ENCODE measurements at regions of chr6 and their contacts with region 1.

Region 1: DNA sequence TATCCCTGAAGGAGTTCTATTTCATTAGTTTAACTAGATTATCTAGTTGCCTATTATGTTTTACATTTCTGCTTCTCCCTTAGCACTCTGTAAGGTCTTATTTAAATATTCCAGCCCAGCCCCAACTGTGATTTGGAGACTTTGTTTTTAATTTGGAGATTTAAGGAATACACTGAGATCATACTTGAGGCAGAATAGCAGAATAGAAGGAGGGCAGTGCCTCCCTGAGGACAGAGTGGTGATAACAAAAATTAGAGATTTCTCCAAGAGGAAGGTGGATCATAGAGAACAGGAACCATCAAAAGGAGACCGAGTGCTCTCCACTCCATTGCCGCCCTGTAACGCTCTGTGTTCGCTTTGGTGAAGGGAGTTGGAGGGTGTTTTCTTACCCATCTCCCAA is 14.8 kb upstream of the CD164 start:
- DNase-seq: no peak
- H3K4me3 ChIP-seq: no peak overlapping the region
- H3K27ac ChIP-seq: no peak overlapping the region
- H3K4me1 ChIP-seq: no peaks in the 10 kb centered on the region
- H3K27me3 ChIP-seq: no peaks in the 10 kb centered on the region
- CTCF ChIP-seq: peak; percentile 23 to 51

Region 2: GRCh38 chr6:109187399-109188114 is 209.5 kb before region 1 on chr6:
- CTCF ChIA-PET with region 1: no interaction called
- dilution Hi-C with region 1: no loop called
- in situ Hi-C with region 1: loop called in 1 of 2 experiments (anchors 5 kb)
- intact Hi-C with region 1: loop called (anchors 1 kb)
- DNase-seq: peak; percentile 16
- H3K4me3 ChIP-seq: no peak overlapping the region
- H3K27ac ChIP-seq: no peak overlapping the region
- H3K4me1 ChIP-seq: no peaks in the 10 kb centered on the region
- H3K27me3 ChIP-seq: peaks cover 2% of the 10 kb centered on the region
- CTCF ChIP-seq: peak; percentile 88 to 98

Region 3: DNA sequence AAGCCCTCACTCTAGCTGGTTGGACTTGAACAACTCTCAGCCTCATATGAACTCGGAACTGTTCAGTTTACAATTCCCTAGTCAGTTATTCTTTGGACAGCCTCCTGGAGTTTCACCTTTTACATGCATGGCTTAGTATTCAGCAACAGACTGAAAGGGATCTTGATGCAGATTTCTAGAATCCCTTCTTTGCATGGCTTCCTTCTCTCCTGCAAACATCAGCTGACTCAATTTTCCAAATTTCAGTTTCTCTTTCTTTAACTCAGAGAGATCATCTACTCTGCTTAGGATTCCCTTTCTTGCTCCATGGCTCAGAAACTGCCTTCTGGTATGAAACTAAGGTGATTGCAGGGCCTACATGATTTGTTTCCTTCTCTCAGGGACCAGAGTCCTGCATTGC is 202.1 kb before region 1 on chr6:
- CTCF ChIA-PET with region 1: no interaction called
- dilution Hi-C with region 1: no loop called
- in situ Hi-C with region 1: loop called in 1 of 2 experiments (anchors 5 kb)
- intact Hi-C with region 1: no loop called
- DNase-seq: no peak
- H3K4me3 ChIP-seq: no peak overlapping the region
- H3K27ac ChIP-seq: no peak overlapping the region
- H3K4me1 ChIP-seq: no peaks in the 10 kb centered on the region
- H3K27me3 ChIP-seq: no peaks in the 10 kb centered on the region
- CTCF ChIP-seq: no peak

Region 4: DNA sequence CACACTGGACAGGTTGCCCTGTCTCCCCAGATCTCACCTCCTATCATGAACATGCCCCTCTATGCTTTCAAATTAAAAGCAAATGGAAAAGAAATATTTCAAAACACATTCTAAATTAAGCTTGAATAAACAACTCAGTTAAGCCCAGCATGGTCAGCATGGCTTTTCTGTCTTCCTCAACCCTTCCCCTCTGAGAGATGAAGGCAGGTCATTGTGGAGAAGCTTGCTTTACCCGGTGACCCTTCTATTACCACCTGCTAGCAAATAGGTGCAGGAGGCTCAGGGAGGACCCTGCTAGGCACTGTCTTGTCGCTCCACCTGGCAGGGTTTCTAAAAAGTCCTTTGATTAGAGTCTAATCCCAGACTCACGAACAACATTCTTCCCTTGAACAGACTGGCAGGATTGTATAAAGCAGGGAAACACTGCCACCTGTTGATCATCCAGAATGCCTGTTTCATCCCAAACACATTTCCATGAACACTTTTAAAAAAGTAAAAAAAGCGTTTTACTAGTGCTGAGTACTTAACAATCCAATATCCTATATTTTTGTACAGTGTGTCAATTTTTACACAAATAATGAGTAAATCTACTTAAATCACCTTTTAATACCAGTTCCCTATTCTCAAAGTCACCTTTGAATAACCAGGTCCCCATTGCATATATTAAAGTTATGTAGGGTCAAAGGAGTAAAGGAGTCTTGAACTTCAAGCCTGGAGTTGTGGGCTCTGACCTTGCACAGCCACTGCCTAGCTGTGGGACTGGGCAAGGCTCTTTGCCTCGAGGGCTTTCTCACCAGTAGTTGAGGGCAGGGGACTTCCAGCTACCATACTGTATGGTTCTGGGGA is 656.6 kb after region 1 on chr6:
- CTCF ChIA-PET with region 1: no interaction called
- dilution Hi-C with region 1: no loop called
- in situ Hi-C with region 1: no loop called
- intact Hi-C with region 1: loop called (anchors 10 kb)
- DNase-seq: peak; percentile 29
- H3K4me3 ChIP-seq: no peak overlapping the region
- H3K27ac ChIP-seq: no peak overlapping the region
- H3K4me1 ChIP-seq: no peaks in the 10 kb centered on the region
- H3K27me3 ChIP-seq: peaks cover 7% of the 10 kb centered on the region
- CTCF ChIP-seq: peak; percentile 77 to 78